ENCODE measurements at regions of chrX and their contacts with region 1.

Region 1: DNA sequence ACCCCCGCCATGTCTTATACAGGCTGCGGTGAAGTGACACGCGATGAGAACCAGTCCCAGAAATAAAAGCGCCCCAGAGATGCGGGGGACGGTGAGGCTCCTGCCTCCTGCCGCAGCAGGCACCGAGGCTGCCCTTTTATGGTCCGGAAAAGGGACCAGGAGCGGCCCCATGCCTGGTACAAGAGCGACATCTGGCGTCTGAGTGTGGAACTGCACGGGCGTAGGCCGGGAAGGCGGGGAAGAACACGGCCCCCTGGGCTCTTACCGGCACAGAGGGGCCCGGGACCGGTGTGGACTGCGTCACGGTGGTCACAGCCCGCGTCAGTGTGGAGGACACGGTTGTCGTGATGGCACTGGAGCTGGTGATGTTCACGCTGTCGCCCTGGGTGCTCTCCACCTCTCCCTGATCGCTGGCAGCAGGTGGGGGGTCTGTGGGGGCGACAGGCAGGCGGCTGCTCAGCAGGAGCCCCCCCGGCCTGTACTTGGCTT is 8.9 kb upstream of the RENBP start:
- DNase-seq: peak; percentile 55 to 89 (median 74)
- ATAC-seq: peak; percentile 87
- H3K4me3 ChIP-seq: no peak overlapping the region
- H3K4me3 Mint-ChIP-seq: no peak overlapping the region
- H3K27ac ChIP-seq: peak overlapping the region in 1 of 2 experiments; percentile 40
- H3K27ac Mint-ChIP-seq: no peak overlapping the region
- H3K4me1 ChIP-seq: peaks cover 16% of the 10 kb centered on the region
- H3K4me1 Mint-ChIP-seq: peaks cover 7% of the 10 kb centered on the region
- H3K27me3 ChIP-seq: no peaks in the 10 kb centered on the region
- H3K27me3 Mint-ChIP-seq: no peaks in the 10 kb centered on the region
- CTCF ChIP-seq: peak; percentile 78

Region 2: GRCh38 chrX:152958524-152959465 is 994.6 kb before region 1 on chrX:
- CTCF ChIA-PET with region 1: no interaction called
- POLR2A ChIA-PET with region 1: no interaction called
- intact Hi-C with region 1: loop called in 1 of 2 experiments (anchors 2 kb)
- DNase-seq: peak; percentile 82 to 97 (median 90)
- ATAC-seq: peak; percentile 97
- H3K4me3 ChIP-seq: peak overlapping the region; percentile 29 to 34
- H3K4me3 Mint-ChIP-seq: peak overlapping the region; percentile 71
- H3K27ac ChIP-seq: peak overlapping the region; percentile 48 to 73
- H3K27ac Mint-ChIP-seq: peak overlapping the region; percentile 89
- H3K4me1 ChIP-seq: peaks cover 6% of the 10 kb centered on the region
- H3K4me1 Mint-ChIP-seq: peaks cover 5% of the 10 kb centered on the region
- H3K27me3 ChIP-seq: no peaks in the 10 kb centered on the region
- H3K27me3 Mint-ChIP-seq: no peaks in the 10 kb centered on the region
- CTCF ChIP-seq: peak; percentile 66

Region 3: DNA sequence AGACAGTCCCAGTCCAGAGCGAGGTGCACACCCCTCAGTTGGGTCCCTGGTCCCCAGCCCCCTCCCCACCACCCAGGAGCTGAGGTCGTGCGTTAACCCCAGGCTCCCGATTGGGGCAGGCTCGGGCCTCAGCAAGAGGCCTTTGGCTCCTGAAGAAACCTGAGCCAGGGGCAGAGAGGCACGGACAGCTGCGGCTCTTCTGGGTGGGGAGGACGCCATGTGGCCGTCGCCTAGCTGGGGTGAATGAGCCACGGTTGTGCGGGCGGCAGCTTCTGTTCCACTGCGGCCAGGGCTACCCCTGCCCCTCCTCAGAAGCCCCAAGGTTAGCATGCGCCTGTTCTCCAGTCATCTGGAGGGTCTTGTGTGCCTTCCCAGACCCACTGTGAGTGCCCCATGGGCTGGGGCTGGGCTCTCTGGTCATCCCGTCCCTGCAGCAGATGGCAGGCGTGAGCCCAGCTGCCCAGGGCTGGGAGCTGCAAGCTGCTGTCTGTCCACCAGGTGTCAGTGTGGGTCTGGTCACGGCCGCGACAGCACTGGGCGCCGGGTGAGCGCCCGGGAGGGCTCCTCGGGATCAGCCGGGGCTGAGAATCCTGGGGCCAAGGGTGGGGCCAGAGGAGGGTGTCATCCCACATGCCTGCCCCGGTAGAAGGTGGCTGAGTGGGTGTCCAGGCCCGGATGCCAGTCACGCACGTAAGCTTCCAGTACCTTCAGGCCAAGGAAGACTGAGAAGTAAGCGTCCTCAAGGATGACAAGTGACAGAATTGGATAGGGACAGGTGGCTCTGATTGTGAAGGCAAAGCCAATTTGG is 414.0 kb before region 1 on chrX:
- CTCF ChIA-PET with region 1: no interaction called
- POLR2A ChIA-PET with region 1: no interaction called
- intact Hi-C with region 1: loop called in 1 of 2 experiments (anchors 2 kb)
- DNase-seq: peak; percentile 19 to 75 (median 50)
- ATAC-seq: peak; percentile 82
- H3K4me3 ChIP-seq: no peak overlapping the region
- H3K4me3 Mint-ChIP-seq: no peak overlapping the region
- H3K27ac ChIP-seq: no peak overlapping the region
- H3K27ac Mint-ChIP-seq: no peak overlapping the region
- H3K4me1 ChIP-seq: no peaks in the 10 kb centered on the region
- H3K4me1 Mint-ChIP-seq: no peaks in the 10 kb centered on the region
- H3K27me3 ChIP-seq: no peaks in the 10 kb centered on the region
- H3K27me3 Mint-ChIP-seq: no peaks in the 10 kb centered on the region
- CTCF ChIP-seq: peak; percentile 51

Region 4: GRCh38 chrX:153763989-153764755 is 189.2 kb before region 1 on chrX and contains the start of gene PLXNB3:
- CTCF ChIA-PET with region 1: interaction called, 49 read pairs
- POLR2A ChIA-PET with region 1: no interaction called
- intact Hi-C with region 1: loop called in 1 of 2 experiments (anchors 1 kb)
- DNase-seq: peak; percentile 45 to 89 (median 70)
- ATAC-seq: peak; percentile 88
- H3K4me3 ChIP-seq: no peak within 1 kb of the TSS
- H3K4me3 Mint-ChIP-seq: no peak within 1 kb of the TSS
- H3K27ac ChIP-seq: no peak within 1 kb of the TSS
- H3K27ac Mint-ChIP-seq: no peak within 1 kb of the TSS
- H3K4me1 ChIP-seq: peaks cover 10% of the 10 kb centered on the region
- H3K4me1 Mint-ChIP-seq: peaks cover 10% of the 10 kb centered on the region
- H3K27me3 ChIP-seq: no peaks in the 10 kb centered on the region
- H3K27me3 Mint-ChIP-seq: no peaks in the 10 kb centered on the region
- CTCF ChIP-seq: peak; percentile 52
- total RNA-seq, gene PLXNB3: 0.35 to 0.50 TPM

Region 5: GRCh38 chrX:153794018-153794896 is 159.1 kb before region 1 on chrX and contains the starts of genes IDH3G and SSR4:
- CTCF ChIA-PET with region 1: interaction called, 3 read pairs
- POLR2A ChIA-PET with region 1: interaction called, 3 read pairs
- intact Hi-C with region 1: loop called in 1 of 2 experiments (anchors 10 kb)
- DNase-seq: peak; percentile 84 to 96 (median 90)
- ATAC-seq: peak; percentile 92
- H3K4me3 ChIP-seq: peak within 1 kb of the TSS; percentile 83 to 86
- H3K4me3 Mint-ChIP-seq: peak within 1 kb of the TSS; percentile 90
- H3K27ac ChIP-seq: peak within 1 kb of the TSS; percentile 92 to 95
- H3K27ac Mint-ChIP-seq: peak within 1 kb of the TSS; percentile 95
- H3K4me1 ChIP-seq: peaks cover 34% of the 10 kb centered on the region
- H3K4me1 Mint-ChIP-seq: peaks cover 30% of the 10 kb centered on the region
- H3K27me3 ChIP-seq: no peaks in the 10 kb centered on the region
- H3K27me3 Mint-ChIP-seq: no peaks in the 10 kb centered on the region
- CTCF ChIP-seq: no peak
- total RNA-seq, gene IDH3G: 55.8 to 56.5 TPM
- total RNA-seq, gene SSR4: 175 TPM

Region 6: GRCh38 chrX:153816831-153817690 is 136.3 kb before region 1 on chrX:
- CTCF ChIA-PET with region 1: no interaction called
- POLR2A ChIA-PET with region 1: no interaction called
- intact Hi-C with region 1: loop called in 1 of 2 experiments (anchors 2 kb)
- DNase-seq: peak in 8 of 9 experiments; percentile 7 to 77 (median 46)
- ATAC-seq: peak; percentile 63
- H3K4me3 ChIP-seq: no peak overlapping the region
- H3K4me3 Mint-ChIP-seq: peak overlapping the region; percentile 55
- H3K27ac ChIP-seq: no peak overlapping the region
- H3K27ac Mint-ChIP-seq: peak overlapping the region; percentile 45
- H3K4me1 ChIP-seq: peaks cover 42% of the 10 kb centered on the region
- H3K4me1 Mint-ChIP-seq: peaks cover 40% of the 10 kb centered on the region
- H3K27me3 ChIP-seq: no peaks in the 10 kb centered on the region
- H3K27me3 Mint-ChIP-seq: no peaks in the 10 kb centered on the region
- CTCF ChIP-seq: peak; percentile 28

Region 7: DNA sequence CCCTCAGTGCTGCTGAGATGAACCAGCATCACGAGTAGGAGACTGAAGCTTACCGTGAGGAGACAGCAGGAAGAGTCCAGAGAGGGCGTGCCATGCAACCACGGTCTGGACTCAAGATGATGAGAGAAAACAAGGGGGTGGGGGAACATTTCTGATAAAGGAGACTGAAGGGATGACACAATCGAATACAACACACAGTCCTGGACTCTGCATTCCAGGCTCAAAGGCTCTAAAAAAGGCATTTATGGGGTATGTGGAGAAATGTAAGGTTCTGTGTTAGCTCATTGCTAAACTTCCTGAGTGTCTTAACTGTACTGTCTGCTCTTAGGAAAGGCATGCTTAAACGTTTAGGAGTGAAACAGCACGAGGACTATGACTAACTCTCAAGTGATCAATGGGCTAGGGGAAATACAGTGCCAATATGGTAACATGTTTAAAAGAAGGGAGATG is 86.9 kb after region 1 on chrX:
- CTCF ChIA-PET with region 1: no interaction called
- POLR2A ChIA-PET with region 1: no interaction called
- intact Hi-C with region 1: no loop called
- DNase-seq: peak in 1 of 9 experiments; percentile 23
- ATAC-seq: peak; percentile 39
- H3K4me3 ChIP-seq: no peak overlapping the region
- H3K4me3 Mint-ChIP-seq: no peak overlapping the region
- H3K27ac ChIP-seq: no peak overlapping the region
- H3K27ac Mint-ChIP-seq: peak overlapping the region; percentile 52
- H3K4me1 ChIP-seq: peaks cover 16% of the 10 kb centered on the region
- H3K4me1 Mint-ChIP-seq: peaks cover 44% of the 10 kb centered on the region
- H3K27me3 ChIP-seq: no peaks in the 10 kb centered on the region
- H3K27me3 Mint-ChIP-seq: no peaks in the 10 kb centered on the region
- CTCF ChIP-seq: no peak